Dendritic cell treated with granulocyte-macrophage colony-stimulating factor and Interleukin-4, amounts not matched to agents 40 ng/mL and 50 ng/mL, for 4 days (primary cell): ENCODE measurements at regions of chr11 and their contacts with region 1.

Region 1: DNA sequence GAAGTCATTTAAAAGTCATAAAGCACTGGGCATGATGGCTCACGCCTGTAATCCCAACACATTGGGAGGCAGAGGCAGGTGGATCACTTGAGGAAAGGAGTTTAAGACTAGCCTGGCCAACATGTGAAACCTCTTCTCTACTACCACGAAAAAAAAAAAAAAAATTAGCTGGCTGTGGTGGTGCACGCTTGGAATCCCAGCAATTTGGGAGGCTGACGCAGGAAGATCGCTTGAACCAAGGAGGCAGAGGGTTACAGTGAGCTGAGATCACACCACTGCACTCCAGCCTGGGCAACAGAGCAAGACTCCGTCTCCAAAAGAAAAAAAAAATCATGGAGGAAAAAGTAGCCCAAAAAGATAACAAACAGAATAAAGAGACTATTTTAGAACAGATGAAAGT is 42.2 kb downstream of the NUP98 start:
- H3K4me3 Mint-ChIP-seq: no peak overlapping the region
- H3K27ac Mint-ChIP-seq: no peak overlapping the region
- H3K4me1 Mint-ChIP-seq: no peaks in the 10 kb centered on the region
- H3K27me3 Mint-ChIP-seq: no peaks in the 10 kb centered on the region

Region 2: DNA sequence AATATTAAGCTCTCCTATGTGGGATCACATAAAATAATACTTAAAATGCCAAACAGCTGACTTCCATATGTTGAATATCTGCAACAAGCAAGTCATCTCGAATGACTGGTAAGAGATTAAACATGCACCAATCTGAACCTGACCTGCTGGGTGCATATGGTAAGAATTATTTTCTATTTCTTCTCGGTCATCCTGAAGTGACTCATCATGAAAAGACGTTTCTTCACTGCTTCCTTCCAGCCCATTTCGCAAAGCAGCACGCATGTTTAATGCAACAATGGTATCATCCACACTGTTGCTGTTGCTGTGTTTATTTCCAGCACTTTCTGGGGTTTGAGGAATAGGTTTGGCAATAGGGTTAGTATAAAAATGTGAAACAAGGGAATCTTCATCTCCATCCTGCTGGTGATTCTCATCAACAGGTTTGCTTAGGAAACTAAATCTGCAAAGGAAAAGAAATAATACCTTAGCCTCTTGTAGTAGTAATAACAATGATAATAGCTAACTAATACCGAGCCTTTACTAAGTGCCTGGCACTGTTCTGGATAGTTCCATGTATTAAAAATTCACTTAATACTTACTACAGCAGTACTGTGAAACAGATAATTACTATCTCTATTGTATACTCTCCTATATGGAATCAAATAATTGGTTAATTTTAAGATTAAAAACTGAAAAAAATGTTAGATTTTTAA is 32.0 kb before region 1 on chr11:
- intact Hi-C with region 1: loop called (anchors 5 kb)
- H3K4me3 Mint-ChIP-seq: no peak overlapping the region
- H3K27ac Mint-ChIP-seq: no peak overlapping the region
- H3K4me1 Mint-ChIP-seq: peaks cover 18% of the 10 kb centered on the region
- H3K27me3 Mint-ChIP-seq: no peaks in the 10 kb centered on the region

Region 3: DNA sequence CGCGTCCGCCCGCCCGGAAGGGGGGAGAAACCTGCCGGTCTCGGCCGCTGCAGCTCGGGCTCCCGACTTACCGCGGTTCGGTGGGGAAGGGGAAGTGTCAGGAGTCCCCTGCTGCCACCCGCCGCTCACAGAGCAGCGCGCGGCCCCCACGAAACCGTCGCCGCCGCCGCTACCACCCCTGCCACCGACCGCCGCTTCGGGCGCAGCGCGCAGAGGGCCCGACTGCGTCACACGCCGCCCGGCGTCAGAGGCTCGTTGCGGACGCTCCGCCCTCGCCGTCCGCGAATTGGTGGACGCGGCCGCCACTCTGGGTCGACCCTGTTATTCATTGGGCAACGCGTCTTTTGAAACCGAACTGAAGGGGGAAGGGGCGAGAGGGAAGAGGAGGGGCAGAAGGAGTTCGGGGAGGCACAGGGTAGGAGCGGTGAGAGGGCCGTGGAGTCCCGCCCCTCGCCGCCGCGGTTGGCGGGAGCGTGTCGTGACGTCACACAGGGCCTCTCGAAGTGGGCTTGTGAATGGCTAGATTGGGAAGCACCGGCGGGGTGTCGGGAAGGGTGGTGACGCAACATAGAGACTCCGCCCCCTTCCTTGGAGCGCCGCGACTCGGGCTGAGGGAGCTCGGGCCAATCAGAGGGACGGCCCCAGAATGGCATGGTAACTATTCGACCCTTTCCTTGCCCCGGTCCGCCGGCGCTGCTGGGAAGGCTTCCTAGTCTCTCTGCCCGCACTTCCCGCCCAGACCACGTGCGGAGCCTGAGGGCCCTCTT is 42.4 kb after region 1 on chr11 and contains the start of gene NUP98:
- intact Hi-C with region 1: no loop called
- H3K4me3 Mint-ChIP-seq: peak within 1 kb of the TSS; percentile 93
- H3K27ac Mint-ChIP-seq: peak within 1 kb of the TSS; percentile 98
- H3K4me1 Mint-ChIP-seq: peaks cover 27% of the 10 kb centered on the region
- H3K27me3 Mint-ChIP-seq: no peaks in the 10 kb centered on the region

Region 4: DNA sequence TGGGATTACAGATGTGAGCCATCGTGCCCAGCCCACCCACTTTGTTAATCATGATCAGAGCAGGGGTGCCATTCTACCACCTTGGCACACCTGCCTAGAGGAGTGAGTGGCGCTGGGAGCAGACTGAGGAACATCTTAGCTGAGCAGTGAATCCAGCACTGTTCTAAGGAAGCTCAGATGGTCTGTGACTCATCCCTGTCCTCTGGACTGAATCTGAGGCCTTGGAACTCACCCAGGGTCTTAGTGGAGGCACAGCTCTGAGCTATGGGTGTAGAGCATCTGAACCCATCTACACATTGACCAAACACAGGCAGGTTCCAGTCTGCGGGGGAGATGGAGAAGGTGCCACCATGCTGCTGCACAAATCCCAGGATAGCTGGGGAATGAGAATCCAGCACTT is 68.2 kb after region 1 on chr11:
- intact Hi-C with region 1: no loop called
- H3K4me3 Mint-ChIP-seq: no peak overlapping the region
- H3K27ac Mint-ChIP-seq: peak overlapping the region; percentile 21
- H3K4me1 Mint-ChIP-seq: peaks cover 64% of the 10 kb centered on the region
- H3K27me3 Mint-ChIP-seq: no peaks in the 10 kb centered on the region